HepG2 (cell line): ENCODE measurements at regions of chr17 and their contacts with region 1.

Region 1: DNA sequence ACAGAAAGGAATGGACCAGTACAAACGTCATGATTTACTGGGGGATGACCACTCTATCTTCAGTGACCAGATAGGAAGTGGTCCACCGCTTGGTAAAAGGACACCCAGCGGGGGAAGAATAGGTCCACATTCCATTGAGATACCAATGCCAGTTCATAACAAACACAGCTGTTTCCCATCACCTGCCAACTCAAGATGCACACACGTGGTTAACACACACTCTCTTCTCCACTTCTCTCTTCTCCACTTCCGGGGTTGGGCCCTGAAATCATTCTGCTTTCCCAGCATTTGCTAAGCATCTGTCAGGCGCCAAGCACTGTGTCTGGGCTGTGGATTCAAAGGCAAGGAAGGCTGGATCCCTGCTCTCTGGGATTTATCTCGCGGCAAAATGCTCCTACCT is 175.5 kb downstream of the SLC39A11 start:
- DNase-seq: no peak
- ATAC-seq: no peak
- H3K4me3 ChIP-seq: no peak overlapping the region
- H3K27ac ChIP-seq: no peak overlapping the region
- H3K4me1 ChIP-seq: no peaks in the 10 kb centered on the region
- H3K27me3 ChIP-seq: no peaks in the 10 kb centered on the region
- CTCF ChIP-seq: no peak
- EP300 ChIP-seq: no peak
- POLR2A ChIP-seq: no peak
- RAD21 ChIP-seq: no peak

Region 2: GRCh38 chr17:72850410-72851118 is 66.4 kb before region 1 on chr17:
- CTCF ChIA-PET with region 1: no interaction called
- POLR2A ChIA-PET with region 1: no interaction called
- in situ Hi-C with region 1: loop called (anchors 10 kb)
- intact Hi-C with region 1: no loop called
- DNase-seq: no peak
- ATAC-seq: no peak
- H3K4me3 ChIP-seq: no peak overlapping the region
- H3K27ac ChIP-seq: no peak overlapping the region
- H3K4me1 ChIP-seq: peaks cover 9% of the 10 kb centered on the region
- H3K27me3 ChIP-seq: no peaks in the 10 kb centered on the region
- CTCF ChIP-seq: no peak
- EP300 ChIP-seq: no peak
- POLR2A ChIP-seq: no peak
- RAD21 ChIP-seq: no peak

Region 3: DNA sequence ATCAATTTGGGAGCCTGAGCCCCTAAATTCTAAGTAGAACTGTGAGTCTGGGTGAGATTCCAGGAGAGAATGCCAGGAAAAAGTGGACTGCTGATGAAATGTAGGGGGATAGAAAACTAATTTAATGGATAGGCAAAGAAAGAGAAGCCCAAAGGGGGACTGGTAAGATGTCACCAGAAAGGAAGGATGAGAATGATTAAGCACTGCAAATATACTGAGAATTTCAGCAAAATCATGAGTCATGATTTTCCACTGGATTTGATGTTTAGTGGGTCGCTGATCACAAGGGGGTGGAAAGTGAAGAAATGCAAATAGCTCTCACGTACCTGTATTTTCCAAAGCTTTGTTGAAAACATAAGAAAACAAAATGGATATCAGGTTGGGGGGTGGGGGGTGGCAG is 26.3 kb before region 1 on chr17:
- CTCF ChIA-PET with region 1: no interaction called
- POLR2A ChIA-PET with region 1: no interaction called
- in situ Hi-C with region 1: no loop called
- intact Hi-C with region 1: no loop called
- DNase-seq: no peak
- ATAC-seq: no peak
- H3K4me3 ChIP-seq: no peak overlapping the region
- H3K27ac ChIP-seq: no peak overlapping the region
- H3K4me1 ChIP-seq: no peaks in the 10 kb centered on the region
- H3K27me3 ChIP-seq: no peaks in the 10 kb centered on the region; a peak in 1 of 5 replicates
- CTCF ChIP-seq: no peak
- EP300 ChIP-seq: no peak
- POLR2A ChIP-seq: no peak
- RAD21 ChIP-seq: no peak

Region 4: DNA sequence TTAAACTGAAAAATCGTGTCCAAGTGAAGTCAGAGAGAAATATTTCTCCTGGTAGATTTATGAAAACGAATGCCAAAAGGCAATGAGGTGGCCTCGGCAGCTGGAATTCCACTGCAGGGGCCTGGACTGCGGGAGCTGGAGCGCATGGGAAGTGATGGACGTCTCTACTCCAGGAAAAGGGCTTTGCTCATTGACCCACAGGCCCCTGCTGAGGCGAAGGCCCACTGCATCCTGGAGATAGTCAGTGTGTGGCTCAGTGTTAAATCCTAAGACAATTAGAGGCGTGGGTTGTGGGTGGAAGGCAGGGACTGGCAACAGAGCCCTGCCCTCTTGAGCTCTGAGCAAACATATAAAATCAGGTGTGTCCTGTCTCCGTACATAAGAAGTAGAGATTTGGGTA is 15.9 kb before region 1 on chr17:
- CTCF ChIA-PET with region 1: no interaction called
- POLR2A ChIA-PET with region 1: no interaction called
- in situ Hi-C with region 1: no loop called
- intact Hi-C with region 1: no loop called
- DNase-seq: no peak
- ATAC-seq: no peak
- H3K4me3 ChIP-seq: no peak overlapping the region
- H3K27ac ChIP-seq: no peak overlapping the region
- H3K4me1 ChIP-seq: no peaks in the 10 kb centered on the region
- H3K27me3 ChIP-seq: no peaks in the 10 kb centered on the region
- CTCF ChIP-seq: no peak
- EP300 ChIP-seq: no peak
- POLR2A ChIP-seq: no peak
- RAD21 ChIP-seq: no peak

Region 5: GRCh38 chr17:73013816-73014663 is 97.0 kb after region 1 on chr17:
- CTCF ChIA-PET with region 1: no interaction called
- POLR2A ChIA-PET with region 1: no interaction called
- in situ Hi-C with region 1: no loop called
- intact Hi-C with region 1: no loop called
- DNase-seq: no peak
- ATAC-seq: no peak
- H3K4me3 ChIP-seq: no peak overlapping the region
- H3K27ac ChIP-seq: no peak overlapping the region
- H3K4me1 ChIP-seq: peaks cover 19% of the 10 kb centered on the region
- H3K27me3 ChIP-seq: no peaks in the 10 kb centered on the region
- CTCF ChIP-seq: no peak
- EP300 ChIP-seq: no peak
- POLR2A ChIP-seq: no peak
- RAD21 ChIP-seq: no peak

Region 6: DNA sequence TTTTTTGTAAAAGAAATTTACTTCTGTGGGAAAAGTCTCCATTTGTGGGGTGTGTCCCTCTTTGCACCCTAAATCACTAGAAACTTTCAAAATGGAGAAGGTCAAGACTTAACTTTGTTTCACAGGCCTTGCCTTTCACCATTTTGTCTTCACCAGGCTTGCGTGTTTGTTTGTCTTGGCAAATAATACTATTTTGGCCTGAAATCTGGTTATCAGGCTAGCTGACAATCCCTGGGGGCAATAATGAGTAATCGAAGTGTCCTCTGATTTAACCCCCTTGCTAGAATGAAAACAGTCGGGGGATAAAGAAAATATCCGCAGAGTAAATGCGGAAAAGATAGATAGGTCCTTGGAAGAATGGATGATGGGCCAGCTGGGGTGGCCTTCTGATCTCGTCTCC is 141.0 kb after region 1 on chr17:
- CTCF ChIA-PET with region 1: no interaction called
- POLR2A ChIA-PET with region 1: no interaction called
- in situ Hi-C with region 1: no loop called
- intact Hi-C with region 1: no loop called
- DNase-seq: no peak
- ATAC-seq: no peak
- H3K4me3 ChIP-seq: no peak overlapping the region
- H3K27ac ChIP-seq: no peak overlapping the region
- H3K4me1 ChIP-seq: no peaks in the 10 kb centered on the region
- H3K27me3 ChIP-seq: no peaks in the 10 kb centered on the region
- CTCF ChIP-seq: no peak
- EP300 ChIP-seq: no peak
- POLR2A ChIP-seq: no peak
- RAD21 ChIP-seq: no peak